ENCODE measurements at regions of chr16 and their contacts with region 1.

Region 1: DNA sequence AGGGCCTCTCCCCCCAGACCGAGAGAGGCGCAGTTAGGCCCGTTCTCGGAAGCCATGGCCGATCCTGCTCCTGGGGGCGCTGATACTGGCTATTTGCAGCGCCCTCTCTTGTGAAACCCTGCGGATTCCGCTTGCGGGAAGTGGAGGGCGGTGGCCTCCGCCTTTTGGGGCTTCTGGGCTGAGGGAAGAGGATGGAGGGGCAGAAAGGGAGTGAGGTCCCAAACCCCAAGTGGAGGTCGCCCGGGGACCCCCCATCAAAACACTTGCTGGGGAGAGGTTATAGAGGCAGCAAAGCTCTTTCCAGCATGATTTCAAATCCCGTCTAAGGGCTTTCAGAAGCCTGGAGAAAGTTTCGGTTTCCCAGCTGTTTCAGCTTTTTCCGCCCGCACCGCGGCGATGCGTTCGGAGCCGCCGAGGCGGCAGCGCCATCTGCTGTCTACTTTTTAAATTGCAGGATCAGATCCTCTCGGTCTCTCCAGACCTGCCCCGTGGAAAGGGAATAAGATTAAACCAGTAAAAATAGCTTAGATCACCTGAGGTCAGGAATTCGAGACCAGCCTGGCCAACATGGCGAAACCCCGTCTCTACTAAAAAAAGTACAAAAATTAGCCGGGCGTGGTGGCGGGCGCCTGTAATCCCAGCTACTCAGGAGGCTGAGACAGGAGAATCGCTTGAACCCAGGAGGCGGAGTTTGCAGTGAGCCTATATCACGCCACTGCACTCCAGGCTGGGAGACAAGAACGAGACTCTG is 15.8 kb downstream of the SNX20 start:
- DNase-seq: peak; percentile 69 to 92 (median 85)
- ATAC-seq: peak; percentile 60
- H3K4me3 ChIP-seq: peak overlapping the region; percentile 58
- H3K4me3 Mint-ChIP-seq: peak overlapping the region; percentile 86
- H3K27ac ChIP-seq: peak overlapping the region in 1 of 2 donors; percentile 18
- H3K27ac Mint-ChIP-seq: peak overlapping the region; percentile 88
- H3K4me1 ChIP-seq: peaks cover 39% of the 10 kb centered on the region
- H3K4me1 Mint-ChIP-seq: peaks cover 44% of the 10 kb centered on the region
- H3K27me3 ChIP-seq: no peaks in the 10 kb centered on the region
- H3K27me3 Mint-ChIP-seq: no peaks in the 10 kb centered on the region
- CTCF ChIP-seq: peak; percentile 89

Region 2: DNA sequence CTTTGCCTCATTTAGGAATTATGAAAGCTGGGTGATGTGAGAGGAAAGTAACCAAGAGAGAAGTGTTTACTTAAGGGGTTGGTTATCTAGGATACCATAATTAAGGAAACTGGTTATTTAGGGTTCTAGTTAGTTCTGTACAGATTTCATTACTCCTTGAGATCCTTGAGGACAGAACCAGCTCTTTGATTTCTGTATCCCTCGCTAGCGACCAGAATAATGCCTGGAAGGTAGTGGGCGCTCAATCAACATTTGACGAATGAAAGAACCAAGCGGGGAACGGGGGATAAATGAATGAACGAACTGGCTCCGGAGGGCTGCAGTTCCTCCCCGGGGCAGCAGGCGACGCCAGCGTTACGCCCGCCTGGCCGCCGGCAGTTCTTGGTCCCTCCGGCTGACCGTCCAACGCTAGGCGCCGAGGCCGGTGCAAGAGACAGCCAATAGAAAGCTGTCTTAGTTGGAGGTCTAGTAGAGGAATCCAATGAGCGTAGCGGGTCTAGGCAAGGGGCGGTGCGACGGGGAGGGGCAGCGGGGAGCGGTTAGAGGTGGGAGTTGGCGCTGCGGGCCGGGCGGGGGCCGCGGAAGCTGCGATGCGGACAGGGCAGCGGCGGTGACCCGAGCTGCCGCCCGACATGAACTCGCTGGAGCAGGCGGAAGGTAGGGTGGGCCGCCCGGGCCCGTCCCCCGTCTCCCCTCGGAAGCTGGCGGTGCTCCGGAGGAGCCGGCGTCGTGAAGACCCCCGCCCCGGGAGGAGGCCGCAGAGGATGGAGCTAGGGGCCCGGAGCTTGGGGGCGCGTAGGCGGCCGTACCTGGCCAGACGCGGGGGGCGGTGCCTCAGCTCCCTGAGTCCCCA is 640.4 kb before region 1 on chr16 and contains the start of gene CNEP1R1:
- CTCF ChIA-PET with region 1: interaction called, 4 read pairs
- POLR2A ChIA-PET with region 1: interaction called, 10 read pairs
- intact Hi-C with region 1: loop called (anchors 5 to 10 kb)
- DNase-seq: peak; percentile 83 to 97 (median 91)
- ATAC-seq: peak; percentile 90
- H3K4me3 ChIP-seq: peak within 1 kb of the TSS; percentile 90
- H3K4me3 Mint-ChIP-seq: peak within 1 kb of the TSS; percentile 94
- H3K27ac ChIP-seq: peak within 1 kb of the TSS; percentile 58
- H3K27ac Mint-ChIP-seq: peak within 1 kb of the TSS; percentile 90
- H3K4me1 ChIP-seq: peaks cover 25% of the 10 kb centered on the region
- H3K4me1 Mint-ChIP-seq: peaks cover 38% of the 10 kb centered on the region
- H3K27me3 ChIP-seq: no peaks in the 10 kb centered on the region
- H3K27me3 Mint-ChIP-seq: no peaks in the 10 kb centered on the region
- CTCF ChIP-seq: peak; percentile 99
- total RNA-seq, gene CNEP1R1: 36.6 to 46.3 TPM

Region 3: DNA sequence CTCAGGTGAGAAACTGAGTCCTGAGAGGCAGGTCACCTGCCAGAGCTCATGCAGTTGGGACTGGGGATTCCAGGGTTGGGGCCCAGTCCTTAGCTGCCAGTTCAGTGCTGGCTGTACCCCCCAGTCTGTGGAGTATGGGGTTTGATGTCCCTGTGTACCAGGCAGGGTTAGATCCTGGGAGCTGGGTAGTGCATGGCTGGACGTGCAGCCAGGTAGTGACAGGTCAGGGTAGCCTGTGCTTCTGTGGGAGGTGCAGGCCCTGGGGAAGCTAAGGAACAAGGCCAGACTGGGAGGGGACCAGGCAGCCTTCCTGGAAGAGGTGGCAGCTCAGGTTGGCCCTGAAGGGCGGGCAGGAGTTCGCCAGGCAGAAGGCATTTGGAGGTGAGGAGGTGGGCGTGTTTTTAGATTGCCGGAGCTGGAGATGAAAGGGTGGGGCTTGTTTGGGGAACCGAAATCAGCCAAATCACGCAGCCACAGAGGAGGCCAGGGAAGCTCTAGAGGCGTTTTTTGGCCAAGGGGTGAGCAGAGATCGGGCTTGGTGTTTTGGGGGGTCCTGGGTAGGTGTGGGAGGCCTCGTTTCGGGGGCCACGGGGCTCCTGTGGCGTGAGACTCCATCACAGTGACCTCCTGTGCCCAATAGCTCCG is 391.5 kb before region 1 on chr16:
- CTCF ChIA-PET with region 1: interaction called, 5 read pairs
- POLR2A ChIA-PET with region 1: interaction called, 10 read pairs
- intact Hi-C with region 1: loop called in 1 of 2 experiments (anchors 5 kb)
- DNase-seq: peak in 12 of 14 experiments; percentile 23 to 72 (median 34)
- ATAC-seq: peak; percentile 51
- H3K4me3 ChIP-seq: peak overlapping the region; percentile 73
- H3K4me3 Mint-ChIP-seq: peak overlapping the region; percentile 95
- H3K27ac ChIP-seq: peak overlapping the region; percentile 91 to 93
- H3K27ac Mint-ChIP-seq: peak overlapping the region; percentile 100
- H3K4me1 ChIP-seq: peaks cover 97% of the 10 kb centered on the region
- H3K4me1 Mint-ChIP-seq: peaks cover 99% of the 10 kb centered on the region
- H3K27me3 ChIP-seq: no peaks in the 10 kb centered on the region
- H3K27me3 Mint-ChIP-seq: no peaks in the 10 kb centered on the region
- CTCF ChIP-seq: no peak

Region 4: GRCh38 chr16:50360033-50360778 is 305.1 kb before region 1 on chr16:
- CTCF ChIA-PET with region 1: interaction called, 21 read pairs
- POLR2A ChIA-PET with region 1: interaction called, 7 read pairs
- intact Hi-C with region 1: no loop called
- DNase-seq: no peak
- ATAC-seq: no peak
- H3K4me3 ChIP-seq: no peak overlapping the region
- H3K4me3 Mint-ChIP-seq: no peak overlapping the region
- H3K27ac ChIP-seq: no peak overlapping the region
- H3K27ac Mint-ChIP-seq: peak overlapping the region; percentile 54
- H3K4me1 ChIP-seq: peaks cover 11% of the 10 kb centered on the region
- H3K4me1 Mint-ChIP-seq: peaks cover 81% of the 10 kb centered on the region
- H3K27me3 ChIP-seq: no peaks in the 10 kb centered on the region
- H3K27me3 Mint-ChIP-seq: no peaks in the 10 kb centered on the region
- CTCF ChIP-seq: no peak

Region 5: DNA sequence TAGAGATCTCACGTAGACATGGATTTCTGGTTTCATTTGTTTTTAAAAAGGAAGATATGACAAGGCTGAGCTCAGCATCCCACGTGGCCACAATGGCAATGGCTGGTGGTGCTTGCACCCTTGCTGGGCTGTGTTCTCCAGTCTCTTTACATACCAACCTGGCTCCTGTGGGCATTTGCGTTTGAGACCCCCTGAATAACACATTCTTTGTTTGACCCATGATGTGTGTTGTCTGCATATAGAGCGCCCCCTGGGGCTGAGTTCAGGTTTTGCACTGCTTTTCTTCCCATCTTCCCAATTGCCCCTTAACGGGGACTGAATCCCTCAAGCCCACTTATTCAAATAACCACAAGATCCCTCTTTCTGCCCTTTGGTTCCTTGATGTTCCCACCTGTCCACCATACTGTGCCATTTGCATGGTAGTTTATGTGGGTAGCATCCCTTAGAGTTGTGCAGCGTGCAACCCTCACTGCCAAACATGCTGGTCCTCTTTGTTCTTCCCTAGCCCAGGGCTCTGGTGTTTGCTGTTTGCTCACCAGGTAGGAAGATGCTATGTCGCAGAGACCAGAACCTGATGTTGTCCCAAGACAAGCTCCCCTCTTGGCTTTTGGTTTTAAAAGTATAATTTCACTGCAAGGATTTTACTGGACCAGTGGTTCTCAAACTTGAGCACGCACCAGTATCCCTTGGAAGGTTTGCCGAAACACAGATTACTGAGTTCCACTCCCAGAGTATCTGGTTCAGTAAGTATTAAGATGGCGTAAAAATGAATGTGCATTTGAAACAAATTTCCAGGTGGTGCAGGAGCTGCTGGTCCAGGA is 155.6 kb before region 1 on chr16:
- CTCF ChIA-PET with region 1: no interaction called
- POLR2A ChIA-PET with region 1: no interaction called
- intact Hi-C with region 1: no loop called
- DNase-seq: peak in 12 of 14 experiments; percentile 5 to 65 (median 21)
- ATAC-seq: no peak
- H3K4me3 ChIP-seq: no peak overlapping the region
- H3K4me3 Mint-ChIP-seq: no peak overlapping the region
- H3K27ac ChIP-seq: no peak overlapping the region
- H3K27ac Mint-ChIP-seq: no peak overlapping the region
- H3K4me1 ChIP-seq: no peaks in the 10 kb centered on the region
- H3K4me1 Mint-ChIP-seq: no peaks in the 10 kb centered on the region
- H3K27me3 ChIP-seq: no peaks in the 10 kb centered on the region
- H3K27me3 Mint-ChIP-seq: no peaks in the 10 kb centered on the region
- CTCF ChIP-seq: peak; percentile 71

Region 6: GRCh38 chr16:50627419-50627818 is 37.9 kb before region 1 on chr16:
- CTCF ChIA-PET with region 1: interaction called, 13 read pairs
- POLR2A ChIA-PET with region 1: no interaction called
- intact Hi-C with region 1: no loop called
- DNase-seq: peak; percentile 23 to 78 (median 47)
- ATAC-seq: peak; percentile 85
- H3K4me3 ChIP-seq: peak overlapping the region; percentile 8
- H3K4me3 Mint-ChIP-seq: peak overlapping the region; percentile 83
- H3K27ac ChIP-seq: no peak overlapping the region
- H3K27ac Mint-ChIP-seq: peak overlapping the region; percentile 76
- H3K4me1 ChIP-seq: peaks cover 33% of the 10 kb centered on the region
- H3K4me1 Mint-ChIP-seq: peaks cover 44% of the 10 kb centered on the region
- H3K27me3 ChIP-seq: no peaks in the 10 kb centered on the region
- H3K27me3 Mint-ChIP-seq: no peaks in the 10 kb centered on the region
- CTCF ChIP-seq: peak; percentile 41

Region 7: DNA sequence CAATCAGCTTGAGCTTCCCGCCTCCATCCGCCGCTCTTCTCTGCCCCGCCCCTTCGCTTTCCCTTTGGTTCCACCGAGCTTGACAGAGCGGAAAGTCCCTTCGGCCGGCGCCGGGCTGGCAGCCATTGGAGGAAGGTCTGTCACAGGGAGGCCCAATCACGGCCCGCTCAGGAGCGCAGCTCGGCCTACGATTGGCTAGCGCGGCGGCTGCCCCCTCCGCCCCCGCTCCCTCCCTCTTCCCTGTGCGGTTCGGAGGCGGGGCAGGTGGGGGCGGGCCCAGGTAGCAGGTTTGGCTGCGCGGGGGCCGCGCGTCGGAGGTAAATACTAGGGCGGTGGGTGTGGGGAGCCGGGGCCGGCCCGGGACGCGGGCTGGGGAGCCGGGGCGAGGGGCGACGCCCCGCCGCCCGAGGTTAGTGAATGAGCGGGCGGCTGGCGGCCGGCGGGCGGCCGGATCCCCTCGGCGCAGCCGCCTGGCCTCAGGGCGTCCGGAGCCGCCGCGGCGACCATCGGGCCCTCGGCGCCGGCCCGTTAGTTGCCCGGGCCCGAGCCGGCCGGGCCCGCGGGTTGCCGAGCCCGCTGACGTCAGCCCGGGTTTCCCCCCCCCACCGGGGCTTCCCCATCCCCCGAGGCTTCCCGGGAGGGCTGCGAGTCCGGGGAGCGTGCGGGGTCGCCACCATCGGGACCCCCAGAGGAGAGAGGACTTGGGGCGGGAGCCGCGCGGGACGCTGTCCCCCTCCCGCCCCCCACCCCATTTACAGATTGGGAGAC is 76.7 kb after region 1 on chr16 and contains the start of gene CYLD:
- CTCF ChIA-PET with region 1: interaction called, 12 read pairs
- POLR2A ChIA-PET with region 1: interaction called, 93 read pairs
- intact Hi-C with region 1: loop called (anchors 1 to 2 kb)
- DNase-seq: peak; percentile 98 to 100 (median 99)
- ATAC-seq: peak; percentile 88
- H3K4me3 ChIP-seq: peak within 1 kb of the TSS; percentile 80
- H3K4me3 Mint-ChIP-seq: peak within 1 kb of the TSS; percentile 99
- H3K27ac ChIP-seq: peak within 1 kb of the TSS; percentile 97 to 99
- H3K27ac Mint-ChIP-seq: peak within 1 kb of the TSS; percentile 87
- H3K4me1 ChIP-seq: peaks cover 15% of the 10 kb centered on the region
- H3K4me1 Mint-ChIP-seq: peaks cover 48% of the 10 kb centered on the region
- H3K27me3 ChIP-seq: no peaks in the 10 kb centered on the region
- H3K27me3 Mint-ChIP-seq: no peaks in the 10 kb centered on the region
- CTCF ChIP-seq: no peak
- total RNA-seq, gene CYLD: 360 to 373 TPM